Caco-2 (cell line): ENCODE measurements at regions of chr7 and their contacts with region 1.

Region 1: GRCh38 chr7:4944939-4945338 is 14.0 kb downstream of the MMD2 start:
- DNase-seq: no peak
- H3K4me3 ChIP-seq: no peak overlapping the region
- H3K4me3 Mint-ChIP-seq: no peak overlapping the region
- H3K27ac Mint-ChIP-seq: no peak overlapping the region
- H3K4me1 ChIP-seq: no peaks in the 10 kb centered on the region
- H3K4me1 Mint-ChIP-seq: no peaks in the 10 kb centered on the region
- H3K27me3 ChIP-seq: no peaks in the 10 kb centered on the region
- H3K27me3 Mint-ChIP-seq: peaks cover 8% of the 10 kb centered on the region
- CTCF ChIP-seq: no peak

Region 2: GRCh38 chr7:4449263-4449662 is 495.7 kb before region 1 on chr7:
- CTCF ChIA-PET with region 1: no interaction called
- POLR2A ChIA-PET with region 1: no interaction called
- intact Hi-C with region 1: no loop called
- DNase-seq: no peak
- H3K4me3 ChIP-seq: no peak overlapping the region
- H3K4me3 Mint-ChIP-seq: no peak overlapping the region
- H3K27ac Mint-ChIP-seq: no peak overlapping the region
- H3K4me1 ChIP-seq: no peaks in the 10 kb centered on the region
- H3K4me1 Mint-ChIP-seq: no peaks in the 10 kb centered on the region
- H3K27me3 ChIP-seq: no peaks in the 10 kb centered on the region
- H3K27me3 Mint-ChIP-seq: no peaks in the 10 kb centered on the region
- CTCF ChIP-seq: no peak

Region 3: DNA sequence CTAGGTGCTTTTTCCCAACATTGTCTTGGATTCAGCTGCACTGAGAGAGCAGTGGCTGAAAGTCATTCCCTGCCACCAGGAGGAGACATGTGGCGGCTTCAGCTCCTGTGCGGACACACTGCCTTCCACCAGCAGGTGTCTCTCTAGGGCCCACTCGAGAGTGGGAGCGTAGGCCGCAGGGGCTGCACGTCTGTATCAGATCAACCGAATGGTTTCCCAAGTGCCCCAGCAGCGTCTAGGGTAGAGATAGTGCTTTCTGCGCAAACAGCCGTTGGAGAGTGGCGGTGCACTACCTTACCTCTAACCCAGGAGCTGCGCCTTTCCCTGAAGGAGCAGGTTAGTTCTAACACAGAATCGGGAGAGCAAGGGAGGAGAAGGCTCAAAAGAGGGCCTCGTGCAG is 114.8 kb before region 1 on chr7:
- CTCF ChIA-PET with region 1: no interaction called
- POLR2A ChIA-PET with region 1: interaction called, 15 read pairs
- intact Hi-C with region 1: no loop called
- DNase-seq: peak; percentile 74 to 78
- H3K4me3 ChIP-seq: no peak overlapping the region
- H3K4me3 Mint-ChIP-seq: no peak overlapping the region
- H3K27ac Mint-ChIP-seq: no peak overlapping the region
- H3K4me1 ChIP-seq: no peaks in the 10 kb centered on the region
- H3K4me1 Mint-ChIP-seq: no peaks in the 10 kb centered on the region
- H3K27me3 ChIP-seq: no peaks in the 10 kb centered on the region
- H3K27me3 Mint-ChIP-seq: peaks cover 2% of the 10 kb centered on the region
- CTCF ChIP-seq: peak; percentile 84 to 91

Region 4: DNA sequence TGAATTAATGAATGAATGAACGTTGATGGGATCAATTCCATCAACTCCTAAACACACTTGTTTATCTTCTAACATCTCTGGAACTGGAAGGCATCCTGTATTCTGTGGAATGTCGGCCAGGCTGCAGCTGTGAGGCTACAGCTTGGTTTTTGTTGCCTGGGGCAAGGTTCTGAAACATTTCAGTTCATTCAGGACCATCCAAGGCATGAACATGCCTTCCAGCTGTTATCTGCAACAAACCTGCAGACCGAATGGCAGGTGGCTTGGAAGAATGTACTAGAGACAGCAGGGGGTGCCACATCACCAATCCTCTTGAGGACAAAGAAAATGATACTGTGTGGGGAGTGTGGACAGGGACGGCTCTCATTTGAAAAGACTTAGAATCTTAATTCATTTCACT is 95.6 kb before region 1 on chr7:
- CTCF ChIA-PET with region 1: no interaction called
- POLR2A ChIA-PET with region 1: no interaction called
- intact Hi-C with region 1: no loop called
- DNase-seq: peak; percentile 61 to 71
- H3K4me3 ChIP-seq: no peak overlapping the region
- H3K4me3 Mint-ChIP-seq: no peak overlapping the region
- H3K27ac Mint-ChIP-seq: no peak overlapping the region
- H3K4me1 ChIP-seq: no peaks in the 10 kb centered on the region
- H3K4me1 Mint-ChIP-seq: no peaks in the 10 kb centered on the region
- H3K27me3 ChIP-seq: no peaks in the 10 kb centered on the region
- H3K27me3 Mint-ChIP-seq: peaks cover 10% of the 10 kb centered on the region
- CTCF ChIP-seq: peak; percentile 46 to 47

Region 5: DNA sequence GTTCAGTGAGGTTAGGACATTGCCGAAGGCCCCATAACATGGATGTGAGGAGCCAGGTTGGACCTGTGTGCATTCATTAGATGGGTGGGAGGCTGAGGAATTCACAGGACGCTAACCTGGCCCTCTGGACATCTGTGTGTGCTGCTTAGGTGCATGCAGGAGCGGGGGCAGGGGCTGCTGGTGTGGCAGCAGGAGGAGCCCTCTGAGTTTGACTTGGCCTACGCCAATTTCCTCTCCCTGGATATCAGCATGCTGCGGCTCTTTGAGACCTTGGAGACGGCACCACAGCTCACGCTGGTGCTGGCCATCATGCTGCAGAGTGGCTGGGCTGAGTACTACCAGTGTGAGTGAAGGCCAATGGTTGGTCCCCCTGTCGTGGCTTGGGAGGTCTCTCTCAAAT is 48.5 kb after region 1 on chr7:
- CTCF ChIA-PET with region 1: no interaction called
- POLR2A ChIA-PET with region 1: no interaction called
- intact Hi-C with region 1: no loop called
- DNase-seq: no peak
- H3K4me3 ChIP-seq: no peak overlapping the region
- H3K4me3 Mint-ChIP-seq: no peak overlapping the region
- H3K27ac Mint-ChIP-seq: no peak overlapping the region
- H3K4me1 ChIP-seq: no peaks in the 10 kb centered on the region
- H3K4me1 Mint-ChIP-seq: no peaks in the 10 kb centered on the region
- H3K27me3 ChIP-seq: no peaks in the 10 kb centered on the region
- H3K27me3 Mint-ChIP-seq: no peaks in the 10 kb centered on the region
- CTCF ChIP-seq: no peak